ENCODE measurements at regions of chr1 and their contacts with region 1.

Region 1: DNA sequence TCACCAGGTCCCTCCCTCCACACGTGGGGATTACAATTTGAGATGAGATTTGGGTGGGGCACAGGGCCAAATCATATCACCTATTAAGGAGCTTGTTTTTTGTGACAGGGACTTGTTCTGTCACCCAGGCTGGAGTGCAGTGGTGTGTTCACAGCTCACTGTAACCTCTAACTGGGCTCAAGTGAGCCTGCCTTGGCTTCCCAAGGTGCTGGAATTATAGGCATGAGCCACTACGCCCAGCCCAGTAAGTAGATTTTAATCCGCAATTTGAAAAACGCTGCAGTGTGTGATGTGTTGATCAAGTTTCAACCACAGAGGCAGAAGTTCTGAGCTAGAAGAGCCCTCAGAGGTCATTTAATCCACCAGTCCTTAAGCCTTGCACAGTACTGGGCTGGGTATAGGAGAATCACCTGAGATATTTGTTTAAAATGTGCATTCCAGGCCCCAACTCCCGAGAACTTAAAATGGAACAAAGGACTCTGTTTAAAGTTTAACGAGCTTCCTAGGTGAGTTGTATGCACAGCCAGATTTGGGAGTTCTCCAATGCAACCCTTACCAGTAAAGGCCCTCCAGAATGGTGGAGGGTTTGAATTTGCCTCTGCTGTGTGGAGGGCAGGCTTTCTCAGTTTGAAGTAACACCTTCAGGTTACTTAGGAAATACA is 13.4 kb downstream of the RPL11 start:
- DNase-seq: no peak
- ATAC-seq: no peak
- H3K4me3 ChIP-seq: no peak overlapping the region
- H3K27ac ChIP-seq: no peak overlapping the region
- H3K4me1 ChIP-seq: no peaks in the 10 kb centered on the region
- H3K27me3 ChIP-seq: no peaks in the 10 kb centered on the region
- CTCF ChIP-seq: no peak

Region 2: DNA sequence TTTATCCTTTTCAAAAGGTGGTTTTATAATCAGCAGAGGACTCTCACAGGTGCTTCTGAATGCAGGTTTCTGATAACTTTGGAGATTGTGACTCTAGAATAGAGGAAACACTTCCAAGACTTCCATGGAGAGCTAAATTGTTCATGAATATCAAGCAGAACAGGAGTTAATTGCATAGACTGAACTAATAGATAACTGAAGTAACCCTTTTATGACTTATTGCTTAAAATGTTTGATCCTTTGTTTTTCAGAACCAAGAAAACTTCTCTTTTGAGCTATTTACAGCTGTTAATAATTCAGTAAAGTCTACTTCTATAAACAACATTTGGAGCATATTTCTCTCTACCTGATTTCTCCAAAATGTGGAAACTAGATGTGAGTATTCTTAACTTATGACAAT is 709.2 kb before region 1 on chr1:
- CTCF ChIA-PET with region 1: no interaction called
- POLR2A ChIA-PET with region 1: no interaction called
- in situ Hi-C with region 1: no loop called
- intact Hi-C with region 1: no loop called
- DNase-seq: no peak
- ATAC-seq: no peak
- H3K4me3 ChIP-seq: no peak overlapping the region
- H3K27ac ChIP-seq: no peak overlapping the region
- H3K4me1 ChIP-seq: no peaks in the 10 kb centered on the region
- H3K27me3 ChIP-seq: no peaks in the 10 kb centered on the region
- CTCF ChIP-seq: no peak

Region 3: DNA sequence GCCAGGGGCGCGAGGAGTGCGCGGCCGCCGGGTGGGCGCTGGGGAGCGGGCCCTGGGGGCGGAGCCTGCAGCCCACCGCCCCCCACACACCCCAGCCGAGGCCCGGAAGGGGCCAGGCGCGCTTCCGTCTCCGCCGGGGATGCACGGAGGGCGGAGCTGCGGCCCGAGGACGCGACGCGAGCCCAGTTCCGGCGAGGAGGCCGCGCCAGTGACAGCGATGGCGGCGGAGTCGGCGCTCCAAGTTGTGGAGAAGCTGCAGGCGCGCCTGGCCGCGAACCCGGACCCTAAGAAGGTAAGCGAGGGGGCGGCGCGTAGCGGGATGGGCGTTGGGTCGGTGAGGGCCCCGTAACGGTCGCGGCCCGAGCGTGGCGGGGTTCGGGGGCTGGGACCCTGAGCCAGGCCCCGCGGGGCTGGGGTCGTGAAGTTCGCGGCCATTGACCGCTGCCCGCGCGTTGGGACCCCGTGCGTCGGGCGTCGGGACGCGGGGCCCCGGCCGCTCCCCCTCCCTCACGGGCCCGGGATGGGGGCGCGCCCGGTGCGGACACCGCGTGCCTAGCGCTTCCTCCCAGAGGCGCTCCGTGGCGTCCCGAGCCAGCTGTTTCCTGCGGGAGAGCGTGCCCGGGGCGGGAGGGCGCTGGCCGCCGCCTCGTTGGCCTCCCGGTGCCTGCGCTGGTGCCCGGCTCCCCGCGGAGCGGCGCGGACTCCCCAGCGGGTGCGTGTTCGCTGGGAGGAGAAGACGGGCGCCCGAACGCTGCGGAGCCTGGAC is 38.5 kb after region 1 on chr1 and contains the start of gene ELOA:
- CTCF ChIA-PET with region 1: no interaction called
- POLR2A ChIA-PET with region 1: no interaction called
- in situ Hi-C with region 1: no loop called
- intact Hi-C with region 1: loop called (anchors 5 kb)
- DNase-seq: no peak
- ATAC-seq: peak; percentile 95
- H3K4me3 ChIP-seq: peak within 1 kb of the TSS; percentile 87 to 90
- H3K27ac ChIP-seq: peak within 1 kb of the TSS; percentile 94
- H3K4me1 ChIP-seq: peaks cover 30% of the 10 kb centered on the region
- H3K27me3 ChIP-seq: no peaks in the 10 kb centered on the region
- CTCF ChIP-seq: no peak
- total RNA-seq, gene ELOA: 58.5 TPM